Uterus (tissue), 4 donors: ENCODE measurements at regions of chr17 and their contacts with region 1.

Region 1: DNA sequence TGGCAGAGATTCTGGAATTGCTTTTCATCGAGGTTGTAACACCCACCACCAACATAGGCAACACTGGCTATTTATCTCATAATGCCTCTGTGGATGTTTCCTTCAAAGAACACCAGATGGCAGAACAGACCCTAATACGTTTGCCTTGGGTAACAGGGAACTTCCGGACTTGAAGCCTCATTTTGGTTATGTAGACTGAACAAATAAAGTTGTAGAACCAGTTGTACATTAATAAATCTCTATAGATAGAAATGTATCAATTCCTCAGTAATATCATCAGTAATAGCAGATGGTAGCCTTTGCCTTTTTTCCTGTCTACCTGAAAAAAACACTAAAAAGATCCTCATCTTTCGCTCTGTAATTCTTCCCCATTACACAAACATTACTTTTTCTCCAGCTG is 25.9 kb upstream of the APOH start:
- DNase-seq: peak in 1 of 2 donors; percentile 47
- H3K4me3 ChIP-seq: no peak overlapping the region
- H3K27ac ChIP-seq: no peak overlapping the region
- H3K4me1 ChIP-seq: no peaks in the 10 kb centered on the region
- H3K27me3 ChIP-seq: no peaks in the 10 kb centered on the region
- CTCF ChIP-seq: peak; percentile 73 to 91 (median 82)
- POLR2A ChIP-seq: no peak

Region 2: DNA sequence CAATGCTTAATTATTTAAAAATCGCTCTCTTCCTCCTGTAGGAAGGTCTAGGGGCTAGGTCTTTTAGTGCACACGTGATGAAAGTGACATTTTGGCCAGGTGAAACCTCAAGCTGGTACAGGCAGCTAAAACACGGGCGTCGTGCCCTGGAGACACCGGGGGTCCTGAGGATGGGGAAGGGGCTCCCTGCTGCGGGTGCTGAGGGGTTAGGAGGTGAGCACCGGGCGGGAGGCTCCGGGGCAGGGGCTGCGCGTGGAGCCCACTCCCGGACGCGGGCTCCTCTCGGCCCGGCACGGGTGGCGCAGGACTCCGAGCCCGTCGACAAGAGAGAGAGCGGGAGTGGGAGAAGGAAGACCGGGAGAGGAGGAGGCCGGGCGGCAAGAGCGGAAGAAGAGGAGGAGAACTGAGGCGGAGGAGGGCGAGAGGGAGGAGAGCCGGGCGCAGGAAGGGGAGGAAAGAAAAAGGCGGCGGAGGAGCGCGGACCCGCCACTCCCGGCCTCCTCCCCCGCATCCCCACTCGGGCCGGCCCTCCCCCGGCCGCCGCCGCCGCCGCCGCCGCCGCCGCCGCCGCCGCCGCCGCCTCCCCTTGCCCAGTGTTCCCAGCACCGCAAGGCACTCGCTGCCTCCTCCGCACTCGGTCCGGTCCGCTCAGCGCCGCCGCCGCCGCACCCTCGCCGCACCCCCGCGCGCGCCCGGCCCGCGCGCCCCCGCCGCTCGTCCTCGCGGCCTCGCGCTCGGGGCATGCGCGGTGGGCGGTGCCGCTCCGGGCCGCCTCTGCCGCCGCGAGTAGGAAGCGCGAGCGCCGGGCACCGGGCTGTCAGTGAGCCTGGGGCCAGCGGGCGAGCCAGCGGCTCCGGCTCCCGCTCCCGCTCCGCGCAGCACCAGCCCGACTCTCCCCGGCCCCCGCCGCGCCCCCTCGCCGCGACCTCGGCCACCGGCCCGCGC is 47.0 kb after region 1 on chr17 and contains the start of gene PRKCA:
- intact Hi-C with region 1: no loop called
- DNase-seq: peak; percentile 74 to 82
- H3K4me3 ChIP-seq: peak within 1 kb of the TSS; percentile 60 to 68
- H3K27ac ChIP-seq: peak within 1 kb of the TSS; percentile 87 to 89
- H3K4me1 ChIP-seq: peaks cover 0 to 4% of the 10 kb centered on the region in 2 donors
- H3K27me3 ChIP-seq: no peaks in the 10 kb centered on the region
- CTCF ChIP-seq: no peak
- POLR2A ChIP-seq: peak; percentile 82 to 89
- total RNA-seq, gene PRKCA: 9.0 to 76.1 (median 15.1) TPM

Region 3: GRCh38 chr17:66373944-66374817 is 119.1 kb after region 1 on chr17:
- intact Hi-C with region 1: no loop called
- DNase-seq: no peak
- H3K4me3 ChIP-seq: no peak overlapping the region
- H3K27ac ChIP-seq: no peak overlapping the region
- H3K4me1 ChIP-seq: no peaks in the 10 kb centered on the region
- H3K27me3 ChIP-seq: no peaks in the 10 kb centered on the region
- CTCF ChIP-seq: no peak
- POLR2A ChIP-seq: no peak

Region 4: GRCh38 chr17:66673668-66674315 is 418.7 kb after region 1 on chr17:
- intact Hi-C with region 1: loop called (anchors 2 kb)
- DNase-seq: peak; percentile 43 to 49
- H3K4me3 ChIP-seq: no peak overlapping the region
- H3K27ac ChIP-seq: peak overlapping the region in 1 of 2 donors; percentile 40
- H3K4me1 ChIP-seq: peaks cover 0 to 9% of the 10 kb centered on the region in 2 donors
- H3K27me3 ChIP-seq: no peaks in the 10 kb centered on the region
- CTCF ChIP-seq: peak; percentile 74 to 85 (median 76)
- POLR2A ChIP-seq: no peak